ENCODE measurements at regions of chr3 and their contacts with region 1.

Region 1: GRCh38 chr3:67030785-67031740 is 33.0 kb downstream of the KBTBD8 start:
- DNase-seq: no peak
- H3K4me3 ChIP-seq: no peak overlapping the region
- H3K4me3 Mint-ChIP-seq: no peak overlapping the region
- H3K27ac ChIP-seq: no peak overlapping the region
- H3K27ac Mint-ChIP-seq: no peak overlapping the region
- H3K4me1 ChIP-seq: no peaks in the 10 kb centered on the region
- H3K4me1 Mint-ChIP-seq: no peaks in the 10 kb centered on the region
- H3K27me3 ChIP-seq: no peaks in the 10 kb centered on the region
- H3K27me3 Mint-ChIP-seq: peaks cover 4 to 6% of the 10 kb centered on the region in 2 donors

Region 2: DNA sequence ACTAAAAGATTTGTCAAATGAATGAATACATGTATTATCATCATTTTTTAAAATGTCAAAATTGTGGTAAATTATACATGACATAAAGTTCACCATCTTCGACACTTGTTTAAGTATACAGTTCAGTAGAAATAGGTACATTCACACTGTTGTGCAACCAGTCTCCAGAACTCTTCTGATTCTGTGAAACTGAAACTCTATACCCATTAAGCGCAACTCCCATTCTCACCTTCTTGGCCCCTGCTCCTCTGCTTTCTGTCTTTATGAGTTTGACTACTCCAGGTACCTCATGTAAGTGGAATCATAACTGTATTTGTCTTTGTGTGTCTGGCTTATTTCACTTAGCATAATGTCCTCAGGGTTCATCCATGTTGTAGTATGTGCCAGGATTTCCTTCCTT is 83.0 kb before region 1 on chr3:
- CTCF ChIA-PET with region 1: no interaction called
- POLR2A ChIA-PET with region 1: interaction called, 11 read pairs
- DNase-seq: no peak
- H3K4me3 ChIP-seq: no peak overlapping the region
- H3K4me3 Mint-ChIP-seq: no peak overlapping the region
- H3K27ac ChIP-seq: no peak overlapping the region
- H3K27ac Mint-ChIP-seq: no peak overlapping the region
- H3K4me1 ChIP-seq: no peaks in the 10 kb centered on the region
- H3K4me1 Mint-ChIP-seq: no peaks in the 10 kb centered on the region
- H3K27me3 ChIP-seq: no peaks in the 10 kb centered on the region
- H3K27me3 Mint-ChIP-seq: peaks cover 4 to 6% of the 10 kb centered on the region in 2 donors

Region 3: DNA sequence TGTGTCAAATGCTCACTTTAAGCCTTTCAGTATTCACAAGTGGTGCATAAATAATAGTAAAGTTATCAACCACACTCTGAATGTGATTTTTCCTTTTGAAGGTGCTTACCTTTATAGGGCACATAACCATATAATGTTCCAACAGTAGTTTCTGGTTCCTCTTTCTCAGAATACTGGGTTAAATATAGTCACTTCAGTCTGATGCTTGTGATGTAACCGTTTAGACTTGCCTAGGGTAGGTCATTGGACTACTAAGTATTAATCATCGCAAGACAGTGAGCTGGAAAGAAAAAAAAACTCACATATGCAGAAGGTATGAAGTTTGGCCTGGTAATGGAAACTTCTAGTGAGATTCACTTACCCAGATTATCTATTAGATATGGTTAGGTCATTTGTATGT is 31.1 kb before region 1 on chr3:
- CTCF ChIA-PET with region 1: no interaction called
- POLR2A ChIA-PET with region 1: no interaction called
- DNase-seq: no peak
- H3K4me3 ChIP-seq: no peak overlapping the region
- H3K4me3 Mint-ChIP-seq: peak overlapping the region in 2 of 7 donors; percentile 23 to 75
- H3K27ac ChIP-seq: no peak overlapping the region
- H3K27ac Mint-ChIP-seq: no peak overlapping the region
- H3K4me1 ChIP-seq: peaks cover 15% of the 10 kb centered on the region
- H3K4me1 Mint-ChIP-seq: peaks cover 32 to 55% (median 42%) of the 10 kb centered on the region in 3 donors
- H3K27me3 ChIP-seq: no peaks in the 10 kb centered on the region
- H3K27me3 Mint-ChIP-seq: peaks cover 5 to 17% of the 10 kb centered on the region in 2 donors

Measured in CD8-positive, alpha-beta memory T cell (primary cell).